Lower leg skin (tissue), 4 donors: ENCODE measurements at regions of chr5 and their contacts with region 1.

Region 1: GRCh38 chr5:151051066-151051930 is 29.5 kb downstream of the TNIP1 start:
- DNase-seq: peak; percentile 77 to 97
- H3K4me3 ChIP-seq: no peak overlapping the region
- CTCF ChIP-seq: peak in 1 of 3 donors; percentile 69
- POLR2A ChIP-seq: no peak

Region 2: GRCh38 chr5:151115274-151115905 is 64.1 kb after region 1 on chr5:
- intact Hi-C with region 1: loop called (anchors 5 kb)
- DNase-seq: peak; percentile 68 to 96
- H3K4me3 ChIP-seq: no peak overlapping the region
- CTCF ChIP-seq: peak in 1 of 3 donors; percentile 94
- POLR2A ChIP-seq: no peak